ENCODE measurements at regions of chrX and their contacts with region 1.

Region 1: GRCh38 chrX:32501606-32502005 is 709.7 kb downstream of the DMD start:
- DNase-seq: no peak

Region 2: GRCh38 chrX:32126997-32127396 is 374.6 kb before region 1 on chrX:
- intact Hi-C with region 1: no loop called
- DNase-seq: no peak

Region 3: GRCh38 chrX:32443841-32444240 is 57.8 kb before region 1 on chrX:
- intact Hi-C with region 1: no loop called
- DNase-seq: no peak

Region 4: GRCh38 chrX:32533848-32534247 is 32.2 kb after region 1 on chrX:
- intact Hi-C with region 1: loop called in 1 of 2 experiments (anchors 2 kb)
- DNase-seq: no peak

Region 5: GRCh38 chrX:32614707-32615106 is 113.1 kb after region 1 on chrX:
- intact Hi-C with region 1: no loop called
- DNase-seq: no peak

Measured in posterior vena cava (tissue), 2 donors.